Mammary epithelial cell (primary cell): ENCODE measurements at regions of chr1 and their contacts with region 1.

Region 1: DNA sequence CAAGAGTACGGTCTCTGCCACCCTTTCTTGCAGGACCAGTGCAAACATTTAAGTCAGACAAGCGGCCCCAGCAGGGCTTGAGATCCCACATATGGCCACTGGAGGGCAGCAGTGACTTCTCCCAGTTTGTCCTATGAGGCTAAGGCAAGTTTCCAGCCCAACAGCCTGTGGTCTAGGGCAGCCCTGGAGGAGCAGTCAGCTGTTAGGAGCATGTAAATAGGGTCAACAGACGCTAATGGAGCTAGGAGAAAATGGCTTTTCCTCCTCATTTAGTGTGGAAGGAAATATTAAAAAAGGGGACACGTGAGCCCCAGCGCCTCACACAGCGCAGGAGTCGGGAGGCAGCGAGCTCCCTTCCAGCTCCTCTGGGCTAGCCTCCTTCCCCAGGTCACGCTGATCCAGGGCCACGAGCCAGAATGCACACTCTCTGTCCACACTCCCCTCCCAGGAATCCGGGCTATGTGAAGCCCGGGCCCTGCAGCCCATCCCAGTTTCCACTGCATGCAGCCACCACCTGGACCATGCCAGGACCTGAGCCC is 95.6 kb downstream of the LAMC2 start:
- DNase-seq: peak; percentile 85
- H3K4me3 ChIP-seq: no peak overlapping the region
- H3K27ac ChIP-seq: peak overlapping the region; percentile 58
- H3K4me1 ChIP-seq: peaks cover 67% of the 10 kb centered on the region
- H3K27me3 ChIP-seq: no peaks in the 10 kb centered on the region
- CTCF ChIP-seq: peak; percentile 77 to 95

Region 2: DNA sequence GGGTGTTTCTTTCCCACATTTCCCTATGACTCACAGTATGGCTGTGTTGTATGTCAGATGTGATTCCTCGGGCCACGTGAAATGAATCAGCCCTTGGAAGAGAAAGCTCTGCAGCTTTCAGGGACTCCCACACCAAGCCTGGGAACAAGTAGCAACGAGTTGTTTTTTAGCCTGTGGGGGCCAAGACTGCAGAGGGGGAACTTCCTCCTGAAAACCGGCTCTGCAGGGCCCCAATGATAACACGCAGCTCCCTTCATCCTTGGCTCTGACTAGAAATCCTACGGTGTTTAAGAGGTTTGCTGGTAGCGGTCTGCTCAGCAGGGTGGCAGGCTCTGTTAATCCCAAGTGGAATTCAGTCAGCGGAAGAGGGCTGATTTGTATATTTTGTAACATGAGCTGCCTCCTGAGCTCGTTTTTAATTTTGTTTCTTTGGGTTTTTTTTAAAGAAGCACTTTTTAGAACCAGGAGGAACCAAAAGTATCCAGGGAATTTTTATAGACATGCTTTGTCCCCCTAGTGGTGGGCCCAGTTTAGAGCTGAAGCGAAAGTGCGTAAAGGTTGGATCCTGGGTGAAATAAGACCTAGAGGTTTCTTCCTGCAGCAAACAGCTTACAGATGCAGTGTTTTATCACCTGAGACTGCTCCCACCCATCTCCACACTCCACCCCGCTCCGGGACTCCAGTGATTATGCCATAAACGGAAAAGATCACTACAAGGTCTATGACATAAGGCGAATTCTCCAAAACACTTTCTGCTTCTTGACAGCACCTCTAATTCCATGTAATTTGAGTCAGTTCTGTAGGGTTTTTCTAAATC is 46.8 kb before region 1 on chr1:
- CTCF ChIA-PET with region 1: interaction called, 6 read pairs
- dilution Hi-C with region 1: no loop called
- in situ Hi-C with region 1: no loop called
- intact Hi-C with region 1: loop called (anchors 1 kb)
- DNase-seq: peak; percentile 99
- H3K4me3 ChIP-seq: no peak overlapping the region
- H3K27ac ChIP-seq: peak overlapping the region; percentile 75
- H3K4me1 ChIP-seq: peaks cover 81% of the 10 kb centered on the region
- H3K27me3 ChIP-seq: no peaks in the 10 kb centered on the region
- CTCF ChIP-seq: peak; percentile 49 to 66

Region 3: GRCh38 chr1:183251959-183252450 is 29.6 kb before region 1 on chr1:
- CTCF ChIA-PET with region 1: no interaction called
- dilution Hi-C with region 1: no loop called
- in situ Hi-C with region 1: no loop called
- intact Hi-C with region 1: no loop called
- DNase-seq: peak; percentile 55
- H3K4me3 ChIP-seq: no peak overlapping the region
- H3K27ac ChIP-seq: no peak overlapping the region
- H3K4me1 ChIP-seq: peaks cover 17% of the 10 kb centered on the region
- H3K27me3 ChIP-seq: no peaks in the 10 kb centered on the region
- CTCF ChIP-seq: no peak

Region 4: GRCh38 chr1:183318433-183318832 is 36.8 kb after region 1 on chr1:
- CTCF ChIA-PET with region 1: interaction called, 7 read pairs
- dilution Hi-C with region 1: no loop called
- in situ Hi-C with region 1: no loop called
- intact Hi-C with region 1: loop called (anchors 1 kb)
- DNase-seq: peak; percentile 88
- H3K4me3 ChIP-seq: no peak overlapping the region
- H3K27ac ChIP-seq: no peak overlapping the region
- H3K4me1 ChIP-seq: peaks cover 25% of the 10 kb centered on the region
- H3K27me3 ChIP-seq: no peaks in the 10 kb centered on the region
- CTCF ChIP-seq: peak; percentile 60 to 87

Region 5: DNA sequence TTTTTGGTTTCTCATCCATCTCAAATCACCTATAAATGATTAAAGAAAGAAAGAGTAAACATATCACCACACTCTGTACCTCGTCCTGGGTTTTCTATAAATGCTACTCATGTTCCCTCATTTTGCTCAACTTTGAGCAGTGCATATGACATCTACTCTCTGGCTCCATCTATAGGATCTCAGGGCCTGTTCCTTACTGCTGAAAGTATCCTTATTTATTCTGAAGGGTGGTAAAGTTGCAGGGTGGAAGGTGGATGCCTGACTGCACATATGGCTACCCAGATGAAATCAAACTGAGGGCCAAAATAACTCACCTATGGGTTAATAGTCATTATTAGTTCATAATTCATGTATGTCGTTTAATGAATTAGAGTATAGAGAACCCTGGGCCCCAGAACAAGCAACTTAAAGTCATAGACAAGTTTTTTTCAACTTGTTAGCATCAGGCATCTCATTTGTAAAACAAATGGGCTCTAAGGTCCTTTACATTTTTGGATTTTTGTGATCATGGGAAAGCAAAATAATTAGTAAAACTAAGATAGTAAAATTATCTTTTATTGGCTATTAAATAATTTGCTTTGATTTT is 262.1 kb after region 1 on chr1:
- CTCF ChIA-PET with region 1: no interaction called
- dilution Hi-C with region 1: no loop called
- in situ Hi-C with region 1: no loop called
- intact Hi-C with region 1: loop called (anchors 1 kb)
- DNase-seq: peak; percentile 55
- H3K4me3 ChIP-seq: no peak overlapping the region
- H3K27ac ChIP-seq: no peak overlapping the region
- H3K4me1 ChIP-seq: no peaks in the 10 kb centered on the region
- H3K27me3 ChIP-seq: no peaks in the 10 kb centered on the region
- CTCF ChIP-seq: peak; percentile 75 to 78

Region 6: GRCh38 chr1:183685112-183685713 is 403.6 kb after region 1 on chr1:
- CTCF ChIA-PET with region 1: interaction called, 3 read pairs
- dilution Hi-C with region 1: no loop called
- in situ Hi-C with region 1: no loop called
- intact Hi-C with region 1: loop called (anchors 5 kb)
- DNase-seq: peak; percentile 32
- H3K4me3 ChIP-seq: no peak overlapping the region
- H3K27ac ChIP-seq: no peak overlapping the region
- H3K4me1 ChIP-seq: no peaks in the 10 kb centered on the region
- H3K27me3 ChIP-seq: no peaks in the 10 kb centered on the region
- CTCF ChIP-seq: peak; percentile 65 to 73